BJ (cell line): ENCODE measurements at regions of chr15 and their contacts with region 1.

Region 1: DNA sequence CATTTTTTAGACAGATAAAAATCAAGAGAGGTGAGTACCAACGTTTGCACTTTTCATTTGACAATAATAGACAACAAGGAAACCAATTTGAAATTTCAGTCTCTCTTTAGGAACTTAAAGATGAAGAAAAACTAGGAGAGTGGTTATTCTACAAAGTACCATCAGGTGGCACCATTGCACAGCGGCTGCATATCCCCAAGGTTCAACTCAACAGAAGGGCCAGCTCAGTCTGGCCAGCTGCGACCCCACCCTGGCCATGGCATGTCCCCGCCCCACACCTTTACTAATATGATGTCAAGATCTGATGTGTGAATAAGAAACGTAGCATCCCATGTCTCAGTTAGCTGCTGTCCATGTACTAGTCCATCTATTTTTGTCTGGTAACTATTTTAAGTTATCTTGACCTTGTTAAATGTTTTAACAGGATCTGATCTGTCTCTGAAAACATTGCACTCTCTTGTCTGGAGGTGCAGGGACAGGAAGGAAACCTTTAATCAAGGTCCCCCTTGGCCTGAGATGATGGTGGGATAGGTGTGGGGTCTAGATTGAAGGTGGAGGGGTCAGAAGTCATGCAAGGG is 35.5 kb upstream of the CGNL1 start:
- DNase-seq: no peak
- H3K4me3 ChIP-seq: no peak overlapping the region
- H3K27me3 ChIP-seq: no peaks in the 10 kb centered on the region
- CTCF ChIP-seq: peak; percentile 82

Region 2: DNA sequence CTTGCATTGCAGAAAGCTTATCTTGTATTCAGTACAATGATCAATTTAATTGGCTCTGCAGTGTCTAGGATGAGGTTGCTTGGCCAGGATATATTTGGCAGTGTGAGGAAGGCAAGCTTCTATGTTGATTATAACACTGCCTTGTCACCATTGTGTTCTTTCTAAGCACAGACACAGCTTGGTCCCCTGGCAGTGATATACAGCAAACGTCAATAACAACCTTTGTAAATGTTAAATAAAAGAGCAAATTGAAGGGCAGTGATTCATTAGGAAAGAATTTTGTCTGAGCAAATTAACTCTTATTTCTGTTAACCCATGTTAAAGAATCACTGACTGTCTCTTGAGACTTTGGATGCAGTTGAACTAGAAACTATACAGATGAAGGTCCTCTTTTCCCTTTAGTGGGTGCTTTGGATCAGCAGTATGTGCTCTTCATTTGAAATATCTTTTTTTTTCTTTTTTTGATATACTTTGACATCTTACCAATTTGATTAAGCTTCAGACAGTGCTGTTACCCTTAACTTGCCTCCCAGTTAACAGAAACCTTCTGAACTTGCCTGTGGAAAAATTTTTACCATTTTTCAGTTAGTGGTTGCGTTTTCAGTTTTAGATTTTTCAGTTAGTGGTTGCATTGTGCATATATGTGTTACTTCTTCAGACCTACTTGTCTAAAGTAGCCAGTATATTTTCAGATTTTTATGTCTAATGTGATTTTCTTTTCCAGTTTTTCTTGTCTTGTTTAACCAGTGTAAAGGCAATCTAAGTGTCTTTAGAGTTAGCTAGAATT is 222.6 kb before region 1 on chr15:
- CTCF ChIA-PET with region 1: no interaction called
- POLR2A ChIA-PET with region 1: no interaction called
- DNase-seq: no peak
- H3K4me3 ChIP-seq: no peak overlapping the region
- H3K27me3 ChIP-seq: no peaks in the 10 kb centered on the region
- CTCF ChIP-seq: no peak

Region 3: DNA sequence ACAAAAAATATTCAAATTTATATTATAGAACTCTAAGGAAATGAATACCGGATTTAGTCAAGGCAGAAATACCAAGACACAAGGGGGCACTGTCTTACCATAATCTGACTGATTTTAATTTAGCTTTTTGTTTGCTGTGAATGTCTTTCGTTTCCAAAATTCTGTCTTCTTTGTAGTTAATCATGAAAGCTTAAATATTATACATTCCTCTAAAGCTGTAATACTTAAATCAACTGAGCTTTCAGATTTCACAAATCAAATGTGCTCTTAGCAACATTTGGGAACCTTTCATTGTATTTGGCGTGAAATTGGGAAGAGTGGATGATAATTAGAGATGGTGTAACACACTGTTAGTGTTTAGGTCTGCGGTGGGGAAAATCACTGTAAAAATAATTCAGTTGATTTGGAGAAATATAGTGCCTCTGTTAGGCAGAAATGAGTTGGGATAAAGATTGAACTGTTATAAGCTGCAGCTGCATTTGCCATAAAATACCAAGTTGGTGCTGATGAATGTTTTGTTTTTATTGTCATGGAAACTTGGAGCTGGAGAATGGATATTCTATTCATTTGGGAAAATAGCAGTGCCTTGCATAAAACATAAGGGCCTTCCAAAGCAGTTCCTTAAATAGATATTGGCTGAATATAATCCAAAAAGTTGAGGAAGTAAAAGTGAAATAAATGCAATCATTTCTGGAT is 194.1 kb before region 1 on chr15:
- CTCF ChIA-PET with region 1: interaction called, 24 read pairs
- POLR2A ChIA-PET with region 1: no interaction called
- DNase-seq: no peak
- H3K4me3 ChIP-seq: no peak overlapping the region
- H3K27me3 ChIP-seq: no peaks in the 10 kb centered on the region
- CTCF ChIP-seq: peak; percentile 69

Region 4: GRCh38 chr15:57356636-57357035 is 15.9 kb after region 1 on chr15:
- CTCF ChIA-PET with region 1: interaction called, 49 read pairs
- POLR2A ChIA-PET with region 1: no interaction called
- DNase-seq: peak; percentile 23
- H3K4me3 ChIP-seq: no peak overlapping the region
- H3K27me3 ChIP-seq: no peaks in the 10 kb centered on the region
- CTCF ChIP-seq: no peak

Region 5: DNA sequence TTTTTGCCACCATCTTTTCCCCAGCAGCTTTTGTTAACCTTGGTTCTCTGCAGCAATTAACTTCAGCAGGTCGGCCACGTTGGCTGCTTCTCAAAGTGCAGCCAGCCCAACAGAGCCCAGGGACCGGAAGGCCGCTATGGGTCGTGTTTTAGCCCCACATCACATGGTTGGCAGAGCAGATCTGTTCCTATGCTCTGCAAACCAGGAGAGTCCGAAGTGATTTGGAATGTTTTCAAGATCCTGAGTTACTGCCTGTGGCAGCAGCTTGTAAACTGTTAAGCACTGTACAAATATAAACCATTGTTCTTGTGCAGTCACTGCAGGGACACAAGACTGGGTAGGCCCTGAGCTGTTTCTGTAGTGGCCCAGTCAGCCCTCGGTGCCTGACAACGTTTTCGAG is 181.4 kb after region 1 on chr15:
- CTCF ChIA-PET with region 1: interaction called, 336 read pairs
- POLR2A ChIA-PET with region 1: interaction called, 5 read pairs
- DNase-seq: no peak
- H3K4me3 ChIP-seq: no peak overlapping the region
- H3K27me3 ChIP-seq: no peaks in the 10 kb centered on the region
- CTCF ChIP-seq: no peak

Region 6: DNA sequence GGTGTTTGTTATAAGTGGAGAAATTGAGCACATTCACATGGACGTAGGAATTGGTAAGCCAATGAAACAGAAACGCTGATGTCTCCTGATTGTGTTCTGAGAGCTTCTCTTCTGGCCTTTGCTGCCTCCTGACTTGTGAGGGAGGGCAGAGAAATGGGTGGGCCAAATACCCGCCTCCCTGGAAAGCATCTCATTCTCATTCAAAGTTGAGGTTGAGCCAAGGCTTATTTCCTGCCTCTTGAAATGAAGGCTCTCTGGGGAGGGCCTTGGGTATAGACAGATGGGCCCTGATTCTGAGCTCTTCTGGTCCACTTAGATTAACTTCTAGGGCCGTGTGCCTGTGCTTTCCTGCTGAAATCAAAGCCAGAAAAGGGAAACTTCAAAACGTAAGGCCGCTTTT is 193.5 kb after region 1 on chr15:
- CTCF ChIA-PET with region 1: interaction called, 336 read pairs
- POLR2A ChIA-PET with region 1: no interaction called
- DNase-seq: no peak
- H3K4me3 ChIP-seq: no peak overlapping the region
- H3K27me3 ChIP-seq: no peaks in the 10 kb centered on the region; the same call in 1 of the 2 replicates
- CTCF ChIP-seq: no peak

Region 7: DNA sequence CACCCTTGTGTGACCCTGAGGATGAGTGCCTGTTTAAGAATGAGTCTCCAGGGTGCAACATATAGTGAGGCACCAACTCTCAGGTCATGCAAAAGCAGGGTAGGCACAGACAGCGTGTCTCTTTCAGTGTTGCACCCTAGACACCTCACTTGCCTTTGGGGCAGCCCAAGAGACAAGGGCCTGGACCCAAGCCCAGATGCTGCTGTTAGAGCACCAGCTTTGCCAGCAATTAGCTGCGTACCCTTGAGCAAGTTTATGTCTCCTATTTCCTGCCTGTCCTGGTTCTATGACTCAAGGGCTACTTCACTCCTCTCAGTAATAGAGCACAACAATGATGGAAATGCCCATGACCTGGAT is 920.1 kb after region 1 on chr15:
- CTCF ChIA-PET with region 1: no interaction called
- POLR2A ChIA-PET with region 1: no interaction called
- DNase-seq: no peak
- H3K4me3 ChIP-seq: no peak overlapping the region
- H3K27me3 ChIP-seq: peaks cover 2% of the 10 kb centered on the region
- CTCF ChIP-seq: no peak